ENCODE measurements at regions of chr12 and their contacts with region 1.

Region 1: GRCh38 chr12:113048716-113049127 is 7.8 kb upstream of the DTX1 start:
- DNase-seq: peak; percentile 89
- H3K4me3 Mint-ChIP-seq: no peak overlapping the region
- H3K27ac Mint-ChIP-seq: no peak overlapping the region
- H3K4me1 Mint-ChIP-seq: no peaks in the 10 kb centered on the region
- H3K27me3 Mint-ChIP-seq: peaks cover 16% of the 10 kb centered on the region

Region 2: GRCh38 chr12:113098446-113098896 is 49.7 kb after region 1 on chr12:
- intact Hi-C with region 1: loop called (anchors 1 kb)
- DNase-seq: peak; percentile 87
- H3K4me3 Mint-ChIP-seq: no peak overlapping the region
- H3K27ac Mint-ChIP-seq: no peak overlapping the region
- H3K4me1 Mint-ChIP-seq: peaks cover 2% of the 10 kb centered on the region
- H3K27me3 Mint-ChIP-seq: no peaks in the 10 kb centered on the region

Region 3: DNA sequence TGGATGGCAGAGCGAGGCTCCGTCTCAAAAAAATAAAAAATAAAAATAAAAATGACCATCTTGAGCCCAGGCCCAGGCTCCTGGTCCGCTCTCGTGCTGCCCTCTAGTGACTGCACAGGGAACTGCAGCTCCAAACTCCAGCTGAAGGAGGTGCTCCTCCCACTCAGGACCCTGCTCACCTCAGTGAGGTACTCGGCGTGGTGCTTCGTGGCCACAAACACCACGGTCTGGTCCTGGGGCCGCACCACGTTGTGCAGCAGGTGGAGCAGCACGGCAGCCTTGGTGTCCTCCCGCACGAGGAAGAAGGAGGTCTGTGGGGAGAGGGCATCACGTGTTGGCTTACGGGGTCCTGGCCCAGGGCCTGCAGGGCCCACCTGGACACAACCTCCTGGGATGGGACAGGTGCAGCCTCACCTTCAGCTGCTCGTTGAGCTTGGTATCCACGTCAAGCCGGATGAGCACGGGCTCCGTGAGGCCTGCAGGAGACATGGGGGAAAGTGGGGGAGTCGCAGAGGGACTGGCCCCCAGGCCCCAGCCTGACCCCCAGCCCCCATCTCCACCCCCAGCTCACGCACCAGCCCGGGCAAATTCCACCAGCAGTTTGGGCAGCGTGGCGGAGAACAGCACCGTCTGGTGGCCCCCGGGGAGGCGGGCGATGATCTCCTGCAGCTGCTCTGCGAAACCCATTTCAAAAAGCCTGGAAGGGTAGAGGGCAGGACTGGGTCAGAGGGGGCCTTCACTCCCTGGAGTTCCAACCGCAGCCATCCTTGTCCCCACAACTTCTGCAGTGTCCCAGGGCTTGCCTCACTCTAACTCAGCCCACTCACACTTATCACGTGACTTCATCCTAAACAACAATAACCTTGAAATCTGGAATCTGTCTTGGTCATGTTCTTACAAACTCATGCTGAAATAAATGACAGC is 126.0 kb after region 1 on chr12:
- intact Hi-C with region 1: loop called (anchors 1 kb)
- DNase-seq: peak; percentile 93
- H3K4me3 Mint-ChIP-seq: no peak overlapping the region
- H3K27ac Mint-ChIP-seq: no peak overlapping the region
- H3K4me1 Mint-ChIP-seq: peaks cover 2% of the 10 kb centered on the region
- H3K27me3 Mint-ChIP-seq: no peaks in the 10 kb centered on the region

Region 4: DNA sequence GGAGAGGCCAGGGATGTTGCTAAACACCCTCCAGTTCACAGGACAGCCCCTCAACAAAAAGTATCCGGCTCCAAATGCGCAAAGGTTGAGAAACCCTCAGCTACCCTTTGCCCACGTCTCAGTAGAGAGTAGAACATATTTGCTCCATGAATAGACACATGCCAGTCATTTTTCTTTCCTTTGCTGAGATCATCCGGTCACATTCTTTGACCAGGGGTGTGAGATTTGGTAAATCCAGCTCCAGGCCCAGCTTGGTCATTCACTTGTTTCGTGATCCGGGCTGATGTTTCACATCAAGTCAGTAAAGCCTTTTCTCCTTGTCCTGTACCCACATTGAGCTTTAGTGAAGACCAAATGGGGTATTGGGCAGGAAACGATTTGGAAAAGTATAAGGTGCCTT is 506.5 kb after region 1 on chr12:
- intact Hi-C with region 1: no loop called
- DNase-seq: no peak
- H3K4me3 Mint-ChIP-seq: no peak overlapping the region
- H3K27ac Mint-ChIP-seq: no peak overlapping the region
- H3K4me1 Mint-ChIP-seq: no peaks in the 10 kb centered on the region
- H3K27me3 Mint-ChIP-seq: no peaks in the 10 kb centered on the region

Measured in activated CD4-positive, alpha-beta T cell treated with anti-CD3 and anti-CD28 coated beads, Interleukin-2, amount 10 ng/mL, durations not matched to agents 24 days and 14 days (primary cell).